ACHN (cell line): ENCODE measurements at regions of chr7 and their contacts with region 1.

Region 1: DNA sequence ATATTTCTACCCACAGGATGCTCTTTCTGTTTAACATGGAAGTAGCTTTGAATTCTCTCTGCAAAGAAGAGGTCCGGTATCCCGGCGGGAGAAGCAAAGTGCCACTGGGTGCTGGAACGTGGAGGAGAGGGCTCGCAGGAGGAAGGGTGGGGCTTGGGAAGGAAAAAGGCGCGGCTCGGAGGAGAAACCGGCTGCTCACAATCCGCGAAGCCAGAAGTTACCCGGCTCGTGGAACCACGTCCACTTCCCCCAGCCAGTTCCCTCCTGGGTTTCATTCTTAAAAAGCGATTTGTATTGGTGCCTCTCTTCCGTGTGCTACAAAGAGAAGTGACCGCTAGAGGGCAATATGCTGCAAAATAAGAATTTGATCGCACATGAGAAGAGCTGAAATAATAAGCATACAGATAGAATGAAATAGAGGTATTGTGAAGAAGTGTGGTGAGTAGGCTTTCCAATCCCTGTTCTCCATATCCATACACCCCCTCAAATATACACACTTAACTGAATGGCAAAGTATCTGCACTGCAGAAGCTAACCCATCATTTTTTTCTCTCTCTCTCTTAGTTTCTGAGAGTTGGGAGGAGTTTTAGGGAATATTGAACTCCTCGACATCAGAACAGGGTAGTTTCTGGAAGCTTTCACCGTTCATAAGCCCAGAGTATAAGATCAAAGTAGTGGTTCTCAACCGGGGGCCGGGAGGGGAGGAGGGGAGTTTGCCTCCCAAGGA is 31.1 kb downstream of the TRIL start:
- DNase-seq: peak; percentile 95

Region 2: DNA sequence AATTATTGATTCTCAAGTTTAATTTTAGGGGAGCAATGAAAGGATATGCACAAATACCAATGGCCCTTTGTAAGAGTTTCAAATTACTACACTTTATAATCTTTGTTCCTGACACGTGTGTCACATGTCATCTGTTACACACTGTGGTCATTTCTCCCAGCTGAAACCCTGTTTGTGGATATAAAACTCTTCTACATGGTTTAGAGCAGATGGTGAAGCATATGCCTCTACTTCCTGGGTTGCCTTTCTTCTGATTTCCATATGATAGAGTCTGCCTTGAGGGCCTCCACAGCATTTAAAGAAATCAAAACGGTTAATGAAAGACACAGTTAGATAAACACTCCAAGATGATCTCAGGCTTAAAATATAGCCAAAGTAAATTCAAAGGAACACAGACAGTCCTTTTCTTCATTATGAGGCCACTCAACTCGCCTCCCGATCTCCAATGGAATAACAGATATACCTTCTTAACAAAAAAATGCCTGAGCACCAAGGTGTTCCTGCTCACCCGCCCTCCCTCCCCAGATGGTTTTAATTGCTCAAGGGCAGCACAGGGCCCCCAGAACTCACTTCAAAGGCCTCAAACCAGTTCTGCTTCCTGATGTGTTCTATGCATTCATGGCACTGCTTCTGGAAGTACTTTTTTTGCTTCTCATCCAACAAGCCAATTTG is 144.3 kb after region 1 on chr7:
- in situ Hi-C with region 1: no loop called
- DNase-seq: no peak

Region 3: DNA sequence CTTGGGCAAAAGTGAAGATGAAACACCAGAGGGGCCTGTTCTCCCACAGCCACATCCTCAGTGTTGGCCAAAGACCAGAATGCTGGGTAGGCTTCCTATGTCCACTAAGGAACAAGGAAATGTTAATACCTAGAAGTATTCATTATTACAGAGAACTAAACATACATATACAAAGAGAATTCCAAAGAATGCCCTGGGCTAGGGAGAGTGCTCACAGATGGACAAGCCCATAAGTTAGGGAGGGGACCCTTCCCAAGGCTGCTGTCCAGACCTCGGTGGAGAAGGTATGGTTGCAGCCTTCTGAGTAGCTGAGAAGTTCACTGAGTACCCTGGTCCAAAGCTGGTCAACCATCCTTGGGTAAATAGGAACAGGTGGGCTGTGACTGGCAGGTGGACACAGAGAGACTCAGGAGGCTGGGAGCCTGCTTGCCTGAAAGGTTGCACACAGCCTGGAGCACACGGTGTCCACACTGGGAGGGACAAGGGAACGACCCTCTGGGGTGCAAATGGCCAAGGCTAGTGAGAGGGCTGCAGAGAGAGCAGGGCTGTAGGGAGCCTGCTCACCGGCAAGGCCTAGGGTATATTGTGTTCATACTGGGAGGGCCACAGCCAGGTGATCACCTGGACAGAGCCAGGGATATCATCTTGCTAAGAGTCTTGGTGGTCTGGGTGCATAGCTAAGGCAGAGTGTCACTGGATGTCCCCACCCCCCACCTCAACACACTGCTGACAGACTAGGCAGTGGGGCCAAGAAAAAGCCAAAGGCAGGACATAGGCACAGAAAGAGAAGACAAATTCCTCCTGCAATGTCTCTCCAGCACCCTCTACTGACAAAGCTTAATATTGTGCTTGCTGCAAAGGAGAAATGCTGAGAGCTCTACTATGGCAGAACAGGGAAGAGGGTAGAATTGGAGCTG is 179.0 kb after region 1 on chr7:
- in situ Hi-C with region 1: loop called (anchors 25 kb)
- DNase-seq: peak; percentile 78

Region 4: DNA sequence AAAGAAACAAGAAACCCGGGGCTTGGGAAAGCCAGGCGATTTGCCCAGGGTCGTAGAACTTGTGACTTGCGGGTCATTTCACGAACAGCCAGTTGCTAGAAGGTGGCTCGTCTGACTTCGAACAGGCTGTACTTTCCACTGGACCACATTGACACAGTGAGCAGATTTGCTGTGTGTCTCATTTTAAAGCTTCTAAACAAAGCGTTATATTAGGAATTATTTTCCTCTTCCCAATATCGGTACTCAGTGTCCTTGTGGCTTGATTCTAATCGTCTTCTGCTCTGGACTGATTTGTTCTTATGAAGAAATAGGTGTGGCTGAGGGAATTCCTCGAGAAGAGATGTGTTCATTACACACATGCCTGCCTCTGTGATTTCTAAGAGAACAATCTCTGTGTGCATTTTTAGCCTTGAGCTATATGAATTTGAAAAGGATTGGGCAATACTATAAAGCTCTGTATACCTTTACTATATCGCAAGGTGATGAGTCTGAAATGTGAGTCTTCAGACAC is 486.6 kb after region 1 on chr7:
- in situ Hi-C with region 1: loop called (anchors 10 kb)
- DNase-seq: no peak

Region 5: GRCh38 chr7:29449569-29450271 is 522.7 kb after region 1 on chr7:
- in situ Hi-C with region 1: no loop called
- DNase-seq: no peak